ENCODE measurements at regions of chr2 and their contacts with region 1.

Region 1: GRCh38 chr2:246489-247144 is 17.2 kb downstream of the SH3YL1 start:
- DNase-seq: peak; percentile 47
- H3K4me3 ChIP-seq: no peak overlapping the region
- H3K27ac ChIP-seq: peak overlapping the region; percentile 49
- H3K27me3 ChIP-seq: no peaks in the 10 kb centered on the region
- CTCF ChIP-seq: peak; percentile 64

Region 2: GRCh38 chr2:45342-46130 is 201.1 kb before region 1 on chr2:
- CTCF ChIA-PET with region 1: no interaction called
- POLR2A ChIA-PET with region 1: no interaction called
- DNase-seq: no peak
- H3K4me3 ChIP-seq: no peak overlapping the region
- H3K27ac ChIP-seq: no peak overlapping the region
- H3K27me3 ChIP-seq: no peaks in the 10 kb centered on the region
- CTCF ChIP-seq: no peak

Region 3: GRCh38 chr2:262996-263738 is 16.6 kb after region 1 on chr2:
- CTCF ChIA-PET with region 1: interaction called, 62 read pairs
- POLR2A ChIA-PET with region 1: no interaction called
- DNase-seq: no peak
- H3K4me3 ChIP-seq: peak overlapping the region; percentile 97
- H3K27ac ChIP-seq: no peak overlapping the region
- H3K27me3 ChIP-seq: no peaks in the 10 kb centered on the region
- CTCF ChIP-seq: no peak